ENCODE measurements at regions of chr10 and their contacts with region 1.

Region 1: GRCh38 chr10:59360605-59361405 is 1.5 kb downstream of the FAM13C start:
- DNase-seq: no peak
- ATAC-seq: no peak
- H3K4me3 ChIP-seq: no peak overlapping the region
- H3K27ac ChIP-seq: no peak overlapping the region
- H3K4me1 ChIP-seq: peaks cover 2% of the 10 kb centered on the region; the same call in 1 of the 2 replicates
- H3K27me3 ChIP-seq: peaks cover 12% of the 10 kb centered on the region
- CTCF ChIP-seq: no peak

Region 2: GRCh38 chr10:59195389-59195788 is 165.4 kb before region 1 on chr10:
- CTCF ChIA-PET with region 1: no interaction called
- POLR2A ChIA-PET with region 1: no interaction called
- in situ Hi-C with region 1: no loop called
- intact Hi-C with region 1: no loop called
- DNase-seq: no peak
- ATAC-seq: no peak
- H3K4me3 ChIP-seq: no peak overlapping the region
- H3K27ac ChIP-seq: no peak overlapping the region
- H3K4me1 ChIP-seq: no peaks in the 10 kb centered on the region
- H3K27me3 ChIP-seq: no peaks in the 10 kb centered on the region
- CTCF ChIP-seq: no peak

Region 3: DNA sequence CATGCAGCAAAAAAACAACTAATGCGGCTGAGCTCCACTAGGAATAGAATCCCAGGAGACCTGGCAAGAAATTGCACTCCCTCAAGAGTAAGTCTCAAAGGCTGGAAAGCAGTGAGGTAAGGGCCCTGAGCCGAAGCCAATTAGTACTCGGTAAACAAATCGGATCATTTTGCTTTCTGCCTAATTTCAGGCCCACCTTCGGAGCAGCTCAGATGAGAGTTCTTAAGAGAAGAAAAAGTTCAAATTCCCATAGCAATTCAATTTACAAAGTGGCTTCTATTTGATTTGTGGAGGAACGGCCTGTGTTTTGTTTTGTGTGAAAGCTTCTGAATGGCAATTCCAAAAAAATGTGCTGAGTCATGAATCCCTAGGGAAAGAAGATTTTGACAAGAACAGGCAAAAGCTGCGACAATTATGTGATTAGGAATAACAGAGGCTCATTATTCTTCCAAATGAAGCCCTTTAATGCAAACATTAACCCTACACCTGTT is 288.0 kb after region 1 on chr10:
- CTCF ChIA-PET with region 1: interaction called, 10 read pairs
- POLR2A ChIA-PET with region 1: no interaction called
- in situ Hi-C with region 1: no loop called
- intact Hi-C with region 1: no loop called
- DNase-seq: no peak
- ATAC-seq: no peak
- H3K4me3 ChIP-seq: no peak overlapping the region
- H3K27ac ChIP-seq: no peak overlapping the region
- H3K4me1 ChIP-seq: no peaks in the 10 kb centered on the region
- H3K27me3 ChIP-seq: no peaks in the 10 kb centered on the region
- CTCF ChIP-seq: no peak